Activated CD4-positive, alpha-beta memory T cell treated with anti-CD3 and anti-CD28 coated beads for 36 hours (primary cell): ENCODE measurements at regions of chr1 and their contacts with region 1.

Region 1: DNA sequence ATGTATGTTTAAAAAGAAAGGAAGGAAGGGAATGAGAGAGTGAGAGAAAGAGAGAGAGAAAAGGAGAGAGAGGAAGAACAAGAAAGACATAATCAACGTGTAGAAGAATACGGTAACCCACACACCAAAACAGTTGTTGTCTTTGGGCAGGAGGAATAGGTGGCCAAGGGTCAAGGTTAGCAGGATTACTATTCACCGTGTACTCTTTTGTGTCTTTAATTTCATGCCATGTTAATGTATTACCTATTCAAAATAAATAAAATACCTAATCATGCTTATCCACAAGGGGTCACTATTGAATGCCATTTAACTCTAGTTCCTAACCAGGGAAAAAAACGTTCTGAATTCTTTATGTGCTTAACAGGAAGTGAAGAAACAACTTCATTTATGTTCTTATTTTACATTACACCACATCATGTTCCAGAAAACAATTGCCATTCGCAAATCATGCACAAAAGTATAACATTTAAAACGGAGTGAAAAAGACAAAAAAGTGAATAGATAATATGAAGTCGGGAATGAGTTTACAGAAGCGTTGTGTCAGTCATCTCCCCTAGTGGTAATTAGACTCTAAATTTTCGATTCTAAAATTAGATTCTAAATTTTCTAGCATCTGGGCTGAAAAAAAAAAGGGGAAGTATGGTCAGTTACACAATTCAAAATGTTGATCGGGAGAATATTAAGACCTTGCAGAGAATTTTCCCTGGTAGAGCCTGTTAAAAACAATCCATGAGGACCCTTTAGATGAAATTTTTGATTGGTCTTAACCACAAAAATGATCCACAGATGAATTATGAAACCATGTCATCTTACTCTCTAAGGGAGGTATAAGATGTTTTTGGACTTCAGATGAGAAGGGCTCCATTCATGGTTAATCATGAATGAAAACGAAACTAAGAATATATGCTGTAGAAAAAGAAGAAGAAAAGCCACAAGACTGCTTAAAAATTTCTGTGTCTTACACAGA is 700 bp upstream of the KMO start:
- DNase-seq: no peak
- H3K4me3 Mint-ChIP-seq: peak overlapping the region; percentile 84
- H3K27ac Mint-ChIP-seq: peak overlapping the region; percentile 85
- H3K4me1 Mint-ChIP-seq: peaks cover 20% of the 10 kb centered on the region
- H3K27me3 Mint-ChIP-seq: no peaks in the 10 kb centered on the region

Region 2: GRCh38 chr1:240337781-240338180 is 1193.7 kb before region 1 on chr1:
- CTCF ChIA-PET with region 1: no interaction called
- POLR2A ChIA-PET with region 1: no interaction called
- intact Hi-C with region 1: no loop called
- DNase-seq: no peak
- H3K4me3 Mint-ChIP-seq: no peak overlapping the region
- H3K27ac Mint-ChIP-seq: no peak overlapping the region
- H3K4me1 Mint-ChIP-seq: no peaks in the 10 kb centered on the region
- H3K27me3 Mint-ChIP-seq: no peaks in the 10 kb centered on the region

Region 3: DNA sequence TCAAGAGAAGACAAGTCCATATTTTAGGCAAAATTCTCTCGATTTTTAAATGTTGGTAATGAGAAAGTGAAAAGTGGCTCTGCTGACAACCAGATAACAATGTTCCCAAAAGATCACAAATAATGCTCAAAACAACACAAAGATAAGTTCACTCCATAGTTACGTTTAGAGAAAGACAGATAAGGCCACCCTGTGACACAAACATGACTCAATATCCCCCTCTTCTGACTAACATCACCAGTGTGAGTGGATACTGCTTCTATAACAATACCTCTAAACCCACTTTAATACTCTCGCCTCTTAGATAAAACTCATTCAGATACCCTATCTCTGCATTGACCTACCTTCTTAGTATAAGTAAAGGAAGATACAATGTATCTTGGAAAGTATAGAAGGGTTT is 123.3 kb before region 1 on chr1:
- CTCF ChIA-PET with region 1: no interaction called
- POLR2A ChIA-PET with region 1: no interaction called
- intact Hi-C with region 1: no loop called
- DNase-seq: no peak
- H3K4me3 Mint-ChIP-seq: no peak overlapping the region
- H3K27ac Mint-ChIP-seq: no peak overlapping the region
- H3K4me1 Mint-ChIP-seq: no peaks in the 10 kb centered on the region
- H3K27me3 Mint-ChIP-seq: peaks cover 2% of the 10 kb centered on the region

Region 4: DNA sequence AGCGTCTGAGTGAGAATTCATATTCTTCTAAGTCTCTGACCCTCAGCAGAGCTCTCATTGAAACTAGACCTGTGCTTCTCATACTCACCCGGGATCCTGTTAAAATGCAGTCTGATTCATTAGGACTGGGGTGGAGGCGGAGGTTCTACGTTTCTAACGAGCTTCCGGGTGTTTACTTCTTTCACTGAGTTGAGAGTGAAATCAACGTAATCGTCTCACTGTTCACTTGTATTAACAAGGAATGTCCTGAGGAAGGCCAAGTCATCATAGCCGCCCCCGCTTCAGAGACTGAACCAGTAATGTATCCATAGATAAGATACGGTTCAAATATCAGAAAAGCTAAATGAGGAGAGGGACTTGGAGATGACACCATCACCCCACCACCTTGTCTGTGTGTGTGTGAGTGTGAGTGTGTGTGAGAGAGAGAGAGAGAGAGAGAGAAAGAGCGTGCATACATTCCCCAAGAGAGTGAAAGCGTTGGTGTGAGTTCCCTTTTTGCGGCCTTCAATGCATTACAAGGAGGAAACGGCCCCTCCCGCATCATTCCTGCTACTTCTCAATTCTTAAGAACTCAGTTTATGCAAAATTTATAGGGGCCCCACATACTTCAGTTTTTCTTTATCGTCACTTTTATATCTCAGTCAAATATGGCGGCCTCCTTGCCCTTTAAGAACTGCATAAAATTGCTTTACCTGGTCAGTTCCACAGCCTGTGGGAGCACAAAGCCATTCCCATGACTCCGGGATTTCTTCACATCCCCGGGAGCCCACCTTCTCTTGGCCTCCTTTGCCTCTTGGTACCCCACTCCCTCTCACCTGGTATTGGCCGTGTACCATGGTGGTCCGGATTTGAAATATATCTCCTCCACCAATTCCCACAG is 20.5 kb after region 1 on chr1:
- CTCF ChIA-PET with region 1: interaction called, 3 read pairs
- POLR2A ChIA-PET with region 1: no interaction called
- intact Hi-C with region 1: loop called (anchors 1 kb)
- DNase-seq: peak; percentile 71
- H3K4me3 Mint-ChIP-seq: peak overlapping the region; percentile 68
- H3K27ac Mint-ChIP-seq: peak overlapping the region; percentile 96
- H3K4me1 Mint-ChIP-seq: peaks cover 23% of the 10 kb centered on the region
- H3K27me3 Mint-ChIP-seq: no peaks in the 10 kb centered on the region

Region 5: GRCh38 chr1:241627453-241628259 is 96.2 kb after region 1 on chr1:
- CTCF ChIA-PET with region 1: interaction called, 9 read pairs
- POLR2A ChIA-PET with region 1: no interaction called
- intact Hi-C with region 1: loop called (anchors 1 kb)
- DNase-seq: peak; percentile 36
- H3K4me3 Mint-ChIP-seq: peak overlapping the region; percentile 14
- H3K27ac Mint-ChIP-seq: peak overlapping the region; percentile 20
- H3K4me1 Mint-ChIP-seq: peaks cover 10% of the 10 kb centered on the region
- H3K27me3 Mint-ChIP-seq: no peaks in the 10 kb centered on the region

Region 6: GRCh38 chr1:241834733-241835377 is 303.4 kb after region 1 on chr1:
- CTCF ChIA-PET with region 1: no interaction called
- POLR2A ChIA-PET with region 1: no interaction called
- intact Hi-C with region 1: loop called (anchors 1 kb)
- DNase-seq: no peak
- H3K4me3 Mint-ChIP-seq: no peak overlapping the region
- H3K27ac Mint-ChIP-seq: no peak overlapping the region
- H3K4me1 Mint-ChIP-seq: peaks cover 2% of the 10 kb centered on the region
- H3K27me3 Mint-ChIP-seq: peaks cover 8% of the 10 kb centered on the region

Region 7: DNA sequence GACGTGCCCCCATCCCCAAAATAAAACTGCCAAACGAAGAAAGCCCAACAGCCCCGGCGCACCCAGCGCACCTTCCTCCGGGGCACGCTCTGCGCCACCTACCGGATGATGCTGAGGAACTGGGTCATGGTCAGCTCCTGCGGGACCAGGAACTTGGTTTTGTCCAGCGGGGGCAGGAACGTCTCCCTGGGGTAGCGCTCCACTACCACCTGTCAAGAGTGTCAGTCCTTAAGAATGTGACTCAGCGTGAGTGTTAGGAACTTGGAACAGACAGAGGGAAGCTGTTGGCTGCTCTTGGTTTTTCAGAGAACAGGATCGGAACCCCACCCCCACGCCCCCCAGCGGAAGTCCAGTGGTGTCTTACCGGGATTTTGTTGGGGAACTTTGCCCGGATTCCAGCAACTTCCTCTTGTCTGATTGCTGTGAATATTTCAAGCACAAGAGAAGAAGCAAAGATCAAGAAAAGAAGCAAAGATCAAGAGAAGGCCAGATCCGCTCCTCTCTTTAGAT is 467.0 kb after region 1 on chr1:
- CTCF ChIA-PET with region 1: interaction called, 3 read pairs
- POLR2A ChIA-PET with region 1: no interaction called
- intact Hi-C with region 1: loop called (anchors 1 kb)
- DNase-seq: peak; percentile 67
- H3K4me3 Mint-ChIP-seq: peak overlapping the region; percentile 57
- H3K27ac Mint-ChIP-seq: no peak overlapping the region
- H3K4me1 Mint-ChIP-seq: peaks cover 5% of the 10 kb centered on the region
- H3K27me3 Mint-ChIP-seq: peaks cover 2% of the 10 kb centered on the region